ENCODE measurements at regions of chr10 and their contacts with region 1.

Region 1: GRCh38 chr10:123911866-123912265 is 20.3 kb upstream of the CPXM2 start:
- DNase-seq: no peak
- H3K4me3 ChIP-seq: no peak overlapping the region
- H3K27ac ChIP-seq: no peak overlapping the region
- H3K4me1 ChIP-seq: peaks cover 5% of the 10 kb centered on the region
- H3K27me3 ChIP-seq: no peaks in the 10 kb centered on the region
- CTCF ChIP-seq: no peak
- EP300 ChIP-seq: no peak
- POLR2A ChIP-seq: no peak

Region 2: DNA sequence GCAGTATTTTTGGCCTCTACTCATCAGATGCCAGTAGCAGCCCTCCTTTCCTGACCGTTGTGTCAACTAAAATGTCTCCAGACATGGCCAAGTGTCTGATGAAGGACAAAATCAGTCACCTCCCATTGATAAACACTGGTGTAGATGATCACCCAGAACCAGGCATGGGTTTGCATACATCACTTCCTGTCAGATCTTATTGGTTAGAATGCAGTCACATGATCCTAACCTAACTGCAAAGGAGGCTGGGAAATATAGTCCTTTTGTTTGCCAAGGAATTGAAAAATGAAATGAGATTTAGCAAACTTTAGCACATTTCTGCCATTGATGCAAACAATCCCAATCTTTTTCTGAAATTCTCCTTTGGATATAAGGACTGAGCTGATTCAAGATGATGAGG is 616.2 kb before region 1 on chr10:
- intact Hi-C with region 1: loop called in 1 of 4 experiments (anchors 2 kb)
- DNase-seq: no peak
- H3K4me3 ChIP-seq: no peak overlapping the region
- H3K27ac ChIP-seq: no peak overlapping the region
- H3K4me1 ChIP-seq: no peaks in the 10 kb centered on the region
- H3K27me3 ChIP-seq: no peaks in the 10 kb centered on the region
- CTCF ChIP-seq: no peak
- EP300 ChIP-seq: no peak
- POLR2A ChIP-seq: no peak

Region 3: GRCh38 chr10:123687764-123688163 is 224.1 kb before region 1 on chr10:
- intact Hi-C with region 1: no loop called
- DNase-seq: no peak
- H3K4me3 ChIP-seq: no peak overlapping the region
- H3K27ac ChIP-seq: no peak overlapping the region
- H3K4me1 ChIP-seq: no peaks in the 10 kb centered on the region
- H3K27me3 ChIP-seq: no peaks in the 10 kb centered on the region
- CTCF ChIP-seq: no peak
- EP300 ChIP-seq: no peak
- POLR2A ChIP-seq: no peak

Region 4: GRCh38 chr10:123746061-123746460 is 165.8 kb before region 1 on chr10:
- intact Hi-C with region 1: no loop called
- DNase-seq: no peak
- H3K4me3 ChIP-seq: no peak overlapping the region
- H3K27ac ChIP-seq: no peak overlapping the region
- H3K4me1 ChIP-seq: no peaks in the 10 kb centered on the region
- H3K27me3 ChIP-seq: no peaks in the 10 kb centered on the region
- CTCF ChIP-seq: no peak
- EP300 ChIP-seq: no peak
- POLR2A ChIP-seq: no peak

Region 5: DNA sequence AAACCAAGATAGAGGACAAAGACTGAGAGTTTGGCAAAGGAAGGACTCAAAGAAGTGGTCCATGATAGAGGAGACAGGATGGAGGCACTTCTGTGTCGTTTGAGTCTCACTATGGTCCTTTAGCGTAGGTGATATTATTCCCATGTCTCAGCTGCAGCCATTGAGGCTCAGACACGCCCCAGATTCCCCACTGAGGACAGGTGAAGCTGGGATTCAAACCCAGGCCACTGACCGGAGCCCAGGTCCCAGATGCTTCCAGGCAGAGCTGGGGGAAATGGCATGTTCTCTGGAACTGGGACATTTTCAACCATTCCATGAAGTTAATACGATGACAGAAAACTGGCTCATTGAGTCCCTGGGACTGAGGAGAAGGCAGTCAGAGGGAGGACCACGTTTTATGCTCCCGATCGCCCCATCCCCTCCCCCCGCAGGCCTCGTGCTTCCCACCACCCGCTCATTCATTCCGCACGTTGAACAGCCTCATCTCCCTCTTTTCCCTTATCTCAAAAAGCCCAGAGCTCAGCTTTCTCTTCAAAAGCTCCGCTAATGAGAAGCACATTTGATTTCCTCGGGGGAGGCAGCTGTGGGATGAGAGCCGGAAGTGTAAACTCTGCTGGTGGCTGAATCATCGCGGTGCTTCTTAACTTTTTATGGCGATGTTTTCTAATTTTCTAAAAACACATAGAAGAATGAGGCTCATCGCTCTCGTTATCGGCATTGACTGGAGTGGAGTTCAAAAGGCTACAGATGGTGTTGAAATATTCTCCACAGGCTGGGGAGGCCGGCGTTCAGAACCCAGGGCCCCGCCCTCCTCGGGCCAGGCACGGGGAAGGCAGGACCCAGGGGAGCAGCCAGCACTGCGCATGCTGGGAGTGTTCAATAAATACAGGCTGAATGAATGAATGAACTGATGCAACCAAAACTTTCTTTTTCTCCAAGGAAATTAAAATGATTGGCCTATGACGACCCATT is 442.8 kb after region 1 on chr10:
- intact Hi-C with region 1: no loop called
- DNase-seq: peak; percentile 74 to 87 (median 77)
- H3K4me3 ChIP-seq: no peak overlapping the region
- H3K27ac ChIP-seq: peak overlapping the region in 1 of 2 donors; percentile 59
- H3K4me1 ChIP-seq: peaks cover 2% of the 10 kb centered on the region
- H3K27me3 ChIP-seq: no peaks in the 10 kb centered on the region
- CTCF ChIP-seq: no peak
- EP300 ChIP-seq: no peak
- POLR2A ChIP-seq: no peak

Measured in ovary (tissue), 10 donors.